Psoas muscle (tissue), 8 donors: ENCODE measurements at regions of chr16 and their contacts with region 1.

Region 1: DNA sequence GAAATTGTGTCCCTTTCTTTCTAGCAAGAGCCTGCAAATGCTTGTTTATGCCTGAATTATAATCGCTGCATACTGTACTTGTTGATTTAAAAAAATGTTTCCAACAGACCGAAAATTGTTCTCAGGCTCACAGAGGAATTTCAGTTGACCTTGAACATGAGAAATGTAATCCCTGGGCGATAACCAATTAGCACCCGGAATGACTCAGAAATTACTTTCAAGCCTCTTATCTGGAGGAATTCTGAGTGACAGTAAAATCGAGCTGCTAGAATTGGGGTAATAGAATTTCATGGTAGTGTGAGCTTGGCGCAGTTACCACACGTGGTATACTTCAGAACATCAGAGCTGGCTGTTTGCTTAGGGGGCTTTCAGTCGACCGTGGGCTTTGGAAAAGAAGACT is 139.1 kb upstream of the CACNG3 start:
- DNase-seq: no peak
- ATAC-seq: no peak
- H3K4me3 ChIP-seq: no peak overlapping the region
- H3K27ac ChIP-seq: no peak overlapping the region
- H3K4me1 ChIP-seq: no peaks in the 10 kb centered on the region
- H3K27me3 ChIP-seq: no peaks in the 10 kb centered on the region
- CTCF ChIP-seq: no peak

Region 2: DNA sequence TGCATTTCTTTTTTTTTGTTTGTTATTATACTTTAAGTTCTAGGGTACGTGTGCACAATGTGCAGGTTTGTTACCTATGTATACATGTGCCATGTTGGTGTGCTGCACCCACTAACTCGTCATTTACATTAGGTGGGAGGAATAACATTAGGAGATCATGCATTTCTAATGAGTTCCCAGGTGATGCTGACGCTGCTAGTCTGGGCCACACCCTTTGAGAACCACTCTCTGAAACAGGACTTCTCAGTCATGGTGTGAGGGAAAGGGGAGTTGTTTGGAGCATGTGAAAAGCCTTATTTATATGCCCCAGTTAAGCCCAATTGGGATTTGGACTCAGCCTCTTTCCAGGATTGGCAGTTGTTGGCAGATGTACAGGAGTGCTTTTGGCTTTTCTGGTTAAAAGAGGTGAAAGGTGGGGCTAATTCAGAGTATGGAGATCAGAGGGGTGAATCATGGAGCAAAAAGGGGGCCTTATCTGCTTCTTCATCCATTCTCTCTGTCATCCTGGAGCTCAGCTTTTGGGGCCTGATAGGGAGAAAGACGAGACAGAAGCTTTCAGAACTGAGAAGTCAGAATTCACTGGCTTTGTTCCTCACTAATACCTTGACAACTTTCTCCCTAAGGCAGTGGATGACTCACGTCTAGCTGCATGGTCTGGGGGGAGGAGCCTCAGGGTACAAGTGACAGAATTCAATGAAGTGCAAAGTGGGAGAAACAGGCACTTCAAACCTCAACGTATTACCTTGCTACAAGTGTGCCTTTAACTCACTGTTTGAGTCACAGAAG is 40.9 kb before region 1 on chr16:
- intact Hi-C with region 1: no loop called
- DNase-seq: no peak
- ATAC-seq: no peak
- H3K4me3 ChIP-seq: no peak overlapping the region
- H3K27ac ChIP-seq: no peak overlapping the region
- H3K4me1 ChIP-seq: no peaks in the 10 kb centered on the region
- H3K27me3 ChIP-seq: no peaks in the 10 kb centered on the region
- CTCF ChIP-seq: no peak

Region 3: DNA sequence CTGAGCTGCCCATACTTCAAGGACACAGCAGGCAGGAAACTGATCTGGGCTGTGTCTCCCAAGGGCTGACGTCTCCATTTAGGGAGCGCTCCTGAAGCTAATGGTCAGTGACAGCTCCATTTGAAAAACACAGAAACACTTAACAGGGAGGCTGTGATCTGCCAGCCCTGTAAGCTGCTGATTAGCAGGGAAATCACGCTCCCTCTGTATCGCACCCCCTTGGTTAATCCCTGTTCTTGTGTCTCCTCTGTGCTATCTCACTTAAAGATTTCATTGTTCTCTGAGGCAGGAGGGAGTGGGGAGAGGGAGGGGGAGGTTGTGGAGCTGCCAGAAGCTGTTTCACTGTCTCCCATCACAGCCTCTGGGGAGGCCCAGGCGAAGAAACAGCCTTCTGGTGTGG is 91.7 kb after region 1 on chr16:
- intact Hi-C with region 1: no loop called
- DNase-seq: no peak
- ATAC-seq: no peak
- H3K4me3 ChIP-seq: no peak overlapping the region
- H3K27ac ChIP-seq: no peak overlapping the region
- H3K4me1 ChIP-seq: no peaks in the 10 kb centered on the region
- H3K27me3 ChIP-seq: no peaks in the 10 kb centered on the region
- CTCF ChIP-seq: no peak

Region 4: GRCh38 chr16:25912321-25912720 is 1795.3 kb after region 1 on chr16:
- intact Hi-C with region 1: loop called in 1 of 2 experiments (anchors 5 kb)
- DNase-seq: no peak
- ATAC-seq: no peak
- H3K4me3 ChIP-seq: no peak overlapping the region
- H3K27ac ChIP-seq: no peak overlapping the region
- H3K4me1 ChIP-seq: no peaks in the 10 kb centered on the region
- H3K27me3 ChIP-seq: no peaks in the 10 kb centered on the region
- CTCF ChIP-seq: no peak